ENCODE measurements at regions of chr3 and their contacts with region 1.

Region 1: GRCh38 chr3:123286308-123287023 is 84.7 kb downstream of the SEC22A start:
- DNase-seq: peak; percentile 82
- ATAC-seq: peak; percentile 92
- H3K4me3 Mint-ChIP-seq: no peak overlapping the region
- H3K27ac Mint-ChIP-seq: no peak overlapping the region
- H3K4me1 Mint-ChIP-seq: no peaks in the 10 kb centered on the region
- H3K27me3 Mint-ChIP-seq: no peaks in the 10 kb centered on the region
- CTCF ChIP-seq: peak; percentile 72

Region 2: GRCh38 chr3:122873741-122874515 is 412.5 kb before region 1 on chr3:
- CTCF ChIA-PET with region 1: no interaction called
- POLR2A ChIA-PET with region 1: no interaction called
- DNase-seq: no peak
- ATAC-seq: no peak
- H3K4me3 Mint-ChIP-seq: no peak overlapping the region
- H3K27ac Mint-ChIP-seq: peak overlapping the region; percentile 63; the same call in 1 of the 2 replicates
- H3K4me1 Mint-ChIP-seq: peaks cover 14% of the 10 kb centered on the region
- H3K27me3 Mint-ChIP-seq: no peaks in the 10 kb centered on the region
- CTCF ChIP-seq: no peak

Region 3: GRCh38 chr3:123297627-123297899 is 11.1 kb after region 1 on chr3:
- CTCF ChIA-PET with region 1: interaction called, 14 read pairs
- POLR2A ChIA-PET with region 1: no interaction called
- DNase-seq: peak; percentile 36
- ATAC-seq: peak; percentile 66
- H3K4me3 Mint-ChIP-seq: no peak overlapping the region
- H3K27ac Mint-ChIP-seq: no peak overlapping the region
- H3K4me1 Mint-ChIP-seq: no peaks in the 10 kb centered on the region
- H3K27me3 Mint-ChIP-seq: no peaks in the 10 kb centered on the region
- CTCF ChIP-seq: no peak

Region 4: GRCh38 chr3:123307064-123307463 is 20.6 kb after region 1 on chr3:
- CTCF ChIA-PET with region 1: interaction called, 21 read pairs
- POLR2A ChIA-PET with region 1: no interaction called
- DNase-seq: no peak
- ATAC-seq: no peak
- H3K4me3 Mint-ChIP-seq: no peak overlapping the region
- H3K27ac Mint-ChIP-seq: no peak overlapping the region
- H3K4me1 Mint-ChIP-seq: peaks cover 59% of the 10 kb centered on the region
- H3K27me3 Mint-ChIP-seq: no peaks in the 10 kb centered on the region
- CTCF ChIP-seq: no peak

Region 5: DNA sequence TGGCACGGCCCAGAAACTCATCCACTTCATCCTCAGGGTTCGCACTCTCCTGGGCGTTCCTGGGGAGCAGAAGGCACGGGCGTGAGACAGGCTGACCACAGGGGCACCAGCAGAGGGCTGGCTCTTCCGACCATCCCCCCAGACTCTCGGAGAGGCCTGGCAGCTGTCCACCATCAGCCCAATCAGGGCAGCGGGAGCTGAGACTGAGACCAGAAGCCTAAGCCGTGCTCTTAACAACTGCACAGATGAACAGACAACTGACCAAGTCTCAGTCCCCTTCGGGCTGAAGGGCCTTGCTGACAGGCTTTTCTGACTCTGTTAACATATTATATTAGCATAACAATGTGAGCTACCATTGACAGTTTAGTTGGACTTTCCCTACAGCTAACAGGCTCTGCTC is 33.3 kb after region 1 on chr3:
- CTCF ChIA-PET with region 1: interaction called, 27 read pairs
- POLR2A ChIA-PET with region 1: no interaction called
- DNase-seq: peak; percentile 28
- ATAC-seq: peak; percentile 36
- H3K4me3 Mint-ChIP-seq: peak overlapping the region; percentile 45
- H3K27ac Mint-ChIP-seq: peak overlapping the region; percentile 88
- H3K4me1 Mint-ChIP-seq: peaks cover 80% of the 10 kb centered on the region
- H3K27me3 Mint-ChIP-seq: no peaks in the 10 kb centered on the region
- CTCF ChIP-seq: no peak

Measured in WTC11 (cell line).